ENCODE measurements at regions of chr17 and their contacts with region 1.

Region 1: GRCh38 chr17:42577532-42578281 is at the start of gene PSMC3IP:
- DNase-seq: peak; percentile 82 to 93 (median 89)
- H3K4me3 ChIP-seq: peak within 1 kb of the TSS; percentile 96
- H3K4me3 Mint-ChIP-seq: peak within 1 kb of the TSS; percentile 89 to 99 (median 98)
- H3K27ac ChIP-seq: peak within 1 kb of the TSS; percentile 85
- H3K27ac Mint-ChIP-seq: peak within 1 kb of the TSS; percentile 74 to 99 (median 97)
- H3K4me1 ChIP-seq: peaks cover 13% of the 10 kb centered on the region
- H3K4me1 Mint-ChIP-seq: peaks cover 30 to 34% (median 31%) of the 10 kb centered on the region in 3 donors
- H3K27me3 ChIP-seq: no peaks in the 10 kb centered on the region
- H3K27me3 Mint-ChIP-seq: peaks cover 0 to 1% of the 10 kb centered on the region in 2 donors
- total RNA-seq, gene PSMC3IP: 35.9 to 36.2 TPM

Region 2: DNA sequence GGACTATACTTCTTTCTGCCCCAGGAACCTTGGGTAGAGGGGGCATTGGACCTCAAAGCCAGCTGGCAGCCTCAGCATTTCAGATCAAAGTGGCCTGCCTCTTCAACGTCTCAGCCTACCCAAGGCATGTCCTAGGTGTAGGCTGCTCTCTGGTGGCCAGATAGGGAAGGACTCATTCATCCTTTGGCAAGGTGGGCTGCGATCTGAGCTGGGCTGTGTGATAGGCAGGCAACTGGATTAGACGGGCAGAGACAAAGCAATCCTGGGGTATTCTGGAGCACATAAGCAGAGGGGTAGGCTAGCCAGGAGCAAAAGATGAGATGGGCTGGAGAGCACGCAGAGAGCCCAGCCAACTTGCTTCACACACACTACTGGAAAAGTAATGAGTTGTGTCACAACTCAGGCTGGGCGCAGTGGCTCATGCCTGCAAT is 50.4 kb before region 1 on chr17:
- CTCF ChIA-PET with region 1: interaction called, 11 read pairs
- POLR2A ChIA-PET with region 1: interaction called, 3 read pairs
- DNase-seq: peak; percentile 40 to 82 (median 62)
- H3K4me3 ChIP-seq: no peak overlapping the region
- H3K4me3 Mint-ChIP-seq: peak overlapping the region in 3 of 7 donors; percentile 2 to 32 (median 9)
- H3K27ac ChIP-seq: no peak overlapping the region
- H3K27ac Mint-ChIP-seq: peak overlapping the region in 4 of 8 donors; percentile 21 to 80 (median 42)
- H3K4me1 ChIP-seq: peaks cover 34% of the 10 kb centered on the region
- H3K4me1 Mint-ChIP-seq: peaks cover 37 to 54% (median 44%) of the 10 kb centered on the region in 3 donors
- H3K27me3 ChIP-seq: no peaks in the 10 kb centered on the region
- H3K27me3 Mint-ChIP-seq: peaks cover 0 to 3% of the 10 kb centered on the region in 2 donors

Region 3: GRCh38 chr17:42554250-42555121 is 23.2 kb before region 1 on chr17:
- CTCF ChIA-PET with region 1: interaction called, 12 read pairs
- POLR2A ChIA-PET with region 1: interaction called, 3 read pairs
- DNase-seq: peak; percentile 65 to 86 (median 75)
- H3K4me3 ChIP-seq: peak overlapping the region; percentile 86
- H3K4me3 Mint-ChIP-seq: peak overlapping the region; percentile 87 to 96 (median 89)
- H3K27ac ChIP-seq: peak overlapping the region; percentile 79
- H3K27ac Mint-ChIP-seq: peak overlapping the region; percentile 86 to 96 (median 94)
- H3K4me1 ChIP-seq: peaks cover 12% of the 10 kb centered on the region
- H3K4me1 Mint-ChIP-seq: peaks cover 13 to 41% (median 21%) of the 10 kb centered on the region in 3 donors
- H3K27me3 ChIP-seq: no peaks in the 10 kb centered on the region
- H3K27me3 Mint-ChIP-seq: no peaks in the 10 kb centered on the region

Region 4: DNA sequence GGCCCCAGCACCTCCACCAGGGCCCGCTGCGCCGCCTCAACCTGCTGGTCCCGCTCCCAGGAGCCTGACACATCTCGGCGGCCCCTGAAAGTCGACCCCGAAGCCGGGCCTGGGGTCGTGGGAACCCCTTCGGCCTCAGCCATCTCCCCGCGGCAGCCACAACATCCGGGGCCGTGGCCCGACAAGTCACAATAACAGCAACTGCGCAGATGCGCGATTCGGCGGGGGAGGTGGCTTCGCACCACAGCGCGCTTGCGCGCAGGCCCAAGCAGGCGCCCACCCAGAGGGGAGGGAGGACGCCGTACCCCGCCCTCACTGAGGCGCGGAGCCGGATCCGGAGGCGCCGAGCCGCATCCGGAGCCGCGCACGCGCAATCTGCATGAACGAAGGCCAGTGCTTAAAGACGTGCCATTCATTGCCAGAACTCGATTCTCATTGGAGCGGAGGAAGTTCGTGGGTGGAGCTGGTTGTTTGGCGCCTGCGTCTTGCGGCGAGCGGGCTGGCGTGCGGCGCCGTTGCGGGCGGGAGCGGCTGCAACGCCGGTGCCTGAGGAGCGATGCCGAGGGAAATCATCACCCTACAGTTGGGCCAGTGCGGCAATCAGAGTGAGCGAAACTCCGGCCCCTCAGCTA is 31.6 kb after region 1 on chr17 and contains the starts of genes RETREG3 and TUBG1:
- CTCF ChIA-PET with region 1: interaction called, 23 read pairs
- POLR2A ChIA-PET with region 1: interaction called, 5 read pairs
- DNase-seq: peak; percentile 99 to 100 (median 99)
- H3K4me3 ChIP-seq: peak within 1 kb of the TSS; percentile 93
- H3K4me3 Mint-ChIP-seq: peak within 1 kb of the TSS; percentile 99 to 100 (median 99)
- H3K27ac ChIP-seq: peak within 1 kb of the TSS; percentile 88
- H3K27ac Mint-ChIP-seq: peak within 1 kb of the TSS; percentile 96 to 100 (median 98)
- H3K4me1 ChIP-seq: peaks cover 39% of the 10 kb centered on the region
- H3K4me1 Mint-ChIP-seq: peaks cover 42 to 54% (median 54%) of the 10 kb centered on the region in 3 donors
- H3K27me3 ChIP-seq: no peaks in the 10 kb centered on the region
- H3K27me3 Mint-ChIP-seq: no peaks in the 10 kb centered on the region
- total RNA-seq, gene RETREG3: 39.7 to 40.3 TPM
- total RNA-seq, gene TUBG1: 112 to 119 TPM

Region 5: GRCh38 chr17:42642336-42642735 is 64.6 kb after region 1 on chr17:
- CTCF ChIA-PET with region 1: no interaction called
- POLR2A ChIA-PET with region 1: no interaction called
- DNase-seq: no peak
- H3K4me3 ChIP-seq: no peak overlapping the region
- H3K4me3 Mint-ChIP-seq: no peak overlapping the region
- H3K27ac ChIP-seq: no peak overlapping the region
- H3K27ac Mint-ChIP-seq: no peak overlapping the region
- H3K4me1 ChIP-seq: no peaks in the 10 kb centered on the region
- H3K4me1 Mint-ChIP-seq: no peaks in the 10 kb centered on the region
- H3K27me3 ChIP-seq: no peaks in the 10 kb centered on the region
- H3K27me3 Mint-ChIP-seq: peaks cover 5 to 12% of the 10 kb centered on the region in 2 donors

Region 6: DNA sequence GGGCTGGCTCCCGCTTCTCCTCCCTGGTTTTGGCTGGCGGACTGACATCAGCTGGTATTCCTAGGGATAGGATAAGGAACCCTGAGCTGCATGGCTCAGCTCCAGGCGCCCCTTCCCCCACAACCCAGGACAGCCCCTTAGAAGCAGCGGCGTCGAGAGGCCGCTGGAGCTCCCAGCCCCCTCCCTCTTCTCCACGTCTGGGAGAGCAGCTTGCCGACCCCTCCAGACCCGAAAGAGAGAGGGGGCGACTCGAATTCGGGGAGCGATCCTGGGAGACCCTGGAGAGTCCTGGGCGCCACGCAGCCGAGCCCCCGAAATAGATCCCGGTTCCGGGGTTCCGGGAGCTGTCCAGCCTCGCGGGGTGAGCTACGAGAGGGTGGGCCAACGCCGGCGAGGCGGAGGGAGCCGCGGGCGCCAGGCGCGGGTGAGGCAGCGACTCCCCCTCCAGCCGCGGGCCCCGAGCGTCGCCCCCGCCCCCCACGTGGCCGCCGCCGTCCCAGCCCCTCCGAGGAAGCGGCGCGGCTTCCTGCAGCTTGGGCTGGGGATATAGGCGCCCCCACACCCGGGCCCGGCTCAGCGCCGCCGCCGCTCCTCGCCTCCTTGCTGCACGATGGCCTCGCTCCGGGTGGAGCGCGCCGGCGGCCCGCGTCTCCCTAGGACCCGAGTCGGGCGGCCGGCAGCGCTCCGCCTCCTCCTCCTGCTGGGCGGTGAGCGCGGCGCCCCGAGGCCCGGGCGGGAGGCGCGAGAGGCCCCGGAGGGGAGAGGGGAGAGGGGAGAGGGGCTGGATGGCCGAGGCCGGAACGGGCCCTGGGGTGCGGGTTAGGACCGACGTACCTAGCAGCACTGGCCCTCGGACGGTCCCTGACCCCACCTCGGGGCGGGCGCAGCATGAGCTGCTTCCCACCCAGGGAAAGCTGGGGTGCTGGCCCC is 183.2 kb after region 1 on chr17 and contains the start of gene RAMP2:
- CTCF ChIA-PET with region 1: interaction called, 22 read pairs
- POLR2A ChIA-PET with region 1: interaction called, 3 read pairs
- DNase-seq: peak in 1 of 5 donors; percentile 24
- H3K4me3 ChIP-seq: no peak within 1 kb of the TSS
- H3K4me3 Mint-ChIP-seq: peak within 1 kb of the TSS; percentile 32 to 60 (median 38)
- H3K27ac ChIP-seq: no peak within 1 kb of the TSS
- H3K27ac Mint-ChIP-seq: no peak within 1 kb of the TSS
- H3K4me1 ChIP-seq: peaks cover 6% of the 10 kb centered on the region
- H3K4me1 Mint-ChIP-seq: peaks cover 0 to 15% (median 2%) of the 10 kb centered on the region in 3 donors
- H3K27me3 ChIP-seq: peaks cover 38% of the 10 kb centered on the region
- H3K27me3 Mint-ChIP-seq: peaks cover 35 to 77% of the 10 kb centered on the region in 2 donors
- total RNA-seq, gene RAMP2: not detected